ENCODE measurements at regions of chr6 and their contacts with region 1.

Region 1: GRCh38 chr6:27503436-27504030 is 30.6 kb upstream of the ZNF184 start:
- DNase-seq: peak; percentile 63
- H3K4me3 Mint-ChIP-seq: peak overlapping the region; percentile 88
- H3K27ac Mint-ChIP-seq: peak overlapping the region; percentile 23
- H3K4me1 Mint-ChIP-seq: peaks cover 23% of the 10 kb centered on the region
- H3K27me3 Mint-ChIP-seq: peaks cover 32% of the 10 kb centered on the region

Region 2: GRCh38 chr6:27157459-27158315 is 345.8 kb before region 1 on chr6:
- intact Hi-C with region 1: loop called (anchors 5 kb)
- DNase-seq: peak; percentile 76
- H3K4me3 Mint-ChIP-seq: peak overlapping the region; percentile 78
- H3K27ac Mint-ChIP-seq: peak overlapping the region; percentile 80
- H3K4me1 Mint-ChIP-seq: peaks cover 50% of the 10 kb centered on the region
- H3K27me3 Mint-ChIP-seq: no peaks in the 10 kb centered on the region

Region 3: DNA sequence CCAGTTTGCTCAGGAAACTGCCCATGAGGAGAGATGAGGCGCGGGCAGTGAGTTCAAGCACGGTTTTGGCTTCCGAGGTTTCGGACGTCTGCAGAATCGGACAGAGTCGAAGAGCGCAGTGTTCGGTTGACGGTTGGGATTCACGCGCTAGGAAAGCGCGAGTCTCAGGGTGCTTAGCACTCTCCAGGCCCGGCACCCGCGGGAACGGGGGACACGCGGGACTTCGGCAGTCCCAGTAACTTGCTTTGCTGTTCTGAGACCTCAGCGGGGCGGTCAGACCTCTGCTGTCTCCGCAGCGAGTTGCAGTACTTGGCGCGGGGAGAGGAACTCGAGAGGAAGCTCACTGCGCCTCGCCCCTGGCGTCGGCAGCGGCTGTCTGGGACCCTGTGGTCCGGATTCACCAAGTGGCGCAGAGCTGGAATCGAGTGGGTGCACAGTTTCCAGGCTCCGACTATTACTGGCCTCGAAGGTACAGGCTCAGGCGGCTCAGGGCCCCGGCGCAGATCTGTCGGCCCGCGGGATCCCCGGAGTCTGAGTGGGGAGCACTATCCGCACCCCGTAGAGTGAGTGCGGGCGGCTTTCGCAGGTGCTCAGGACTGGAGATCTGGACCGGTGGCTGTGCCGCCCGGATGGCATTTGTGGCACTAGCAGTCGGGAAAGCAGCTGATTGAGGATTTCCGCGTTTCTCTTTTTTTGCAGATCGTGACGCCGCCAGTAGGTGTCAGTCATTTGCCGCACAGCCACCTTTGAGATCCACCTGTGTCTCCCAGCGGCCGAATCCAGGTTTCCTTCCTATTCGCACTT is 191.2 kb before region 1 on chr6 and contains the start of gene POM121L2:
- intact Hi-C with region 1: loop called (anchors 10 kb)
- DNase-seq: peak; percentile 60
- H3K4me3 Mint-ChIP-seq: peak within 1 kb of the TSS; percentile 77
- H3K27ac Mint-ChIP-seq: no peak within 1 kb of the TSS
- H3K4me1 Mint-ChIP-seq: peaks cover 14% of the 10 kb centered on the region
- H3K27me3 Mint-ChIP-seq: peaks cover 72% of the 10 kb centered on the region
- total RNA-seq, gene POM121L2: not detected in 2 replicates

Region 4: DNA sequence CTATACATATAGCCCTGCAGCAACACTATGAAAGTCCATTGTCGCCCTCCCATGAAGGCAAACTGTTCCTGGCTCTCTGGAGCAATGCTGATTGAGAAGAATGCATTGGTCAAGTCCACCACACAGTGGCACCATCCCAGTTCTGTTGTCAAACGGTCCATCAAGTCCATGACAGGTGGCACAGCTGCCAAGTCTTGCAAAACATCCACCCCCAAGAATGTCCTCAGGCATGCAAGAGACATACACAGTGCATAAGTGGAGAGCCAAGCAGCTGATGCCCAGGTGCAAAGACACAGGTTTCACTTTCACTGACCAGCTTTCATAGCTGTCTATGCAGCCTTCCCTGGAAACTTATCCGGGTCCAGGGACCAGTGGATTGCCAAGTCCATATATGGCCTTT is 97.4 kb before region 1 on chr6:
- intact Hi-C with region 1: no loop called
- DNase-seq: no peak
- H3K4me3 Mint-ChIP-seq: no peak overlapping the region
- H3K27ac Mint-ChIP-seq: no peak overlapping the region
- H3K4me1 Mint-ChIP-seq: no peaks in the 10 kb centered on the region
- H3K27me3 Mint-ChIP-seq: no peaks in the 10 kb centered on the region

Region 5: GRCh38 chr6:27479319-27480182 is 24.0 kb before region 1 on chr6:
- intact Hi-C with region 1: loop called (anchors 1 kb)
- DNase-seq: peak; percentile 82
- H3K4me3 Mint-ChIP-seq: no peak overlapping the region
- H3K27ac Mint-ChIP-seq: no peak overlapping the region
- H3K4me1 Mint-ChIP-seq: peaks cover 3% of the 10 kb centered on the region
- H3K27me3 Mint-ChIP-seq: peaks cover 12% of the 10 kb centered on the region

Region 6: GRCh38 chr6:27687154-27688013 is 183.9 kb after region 1 on chr6:
- intact Hi-C with region 1: loop called (anchors 5 kb)
- DNase-seq: peak; percentile 73
- H3K4me3 Mint-ChIP-seq: peak overlapping the region; percentile 88
- H3K27ac Mint-ChIP-seq: peak overlapping the region; percentile 68
- H3K4me1 Mint-ChIP-seq: peaks cover 16% of the 10 kb centered on the region
- H3K27me3 Mint-ChIP-seq: peaks cover 17% of the 10 kb centered on the region

Region 7: GRCh38 chr6:27720607-27721580 is 217.4 kb after region 1 on chr6:
- intact Hi-C with region 1: no loop called
- DNase-seq: no peak
- H3K4me3 Mint-ChIP-seq: no peak overlapping the region
- H3K27ac Mint-ChIP-seq: no peak overlapping the region
- H3K4me1 Mint-ChIP-seq: peaks cover 16% of the 10 kb centered on the region
- H3K27me3 Mint-ChIP-seq: peaks cover 22% of the 10 kb centered on the region

Measured in activated T-helper 2 cell treated with anti-CD3 and anti-CD28 coated beads, Interferon-gamma antibody, Interleukin-2, Interleukin-4, amounts not matched to agents 10 μg/mL and 5 μg/mL and 100 μg/mL, durations not matched to agents 14 hours and 24 hours and 36 hours (primary cell).